ENCODE measurements at regions of chr17 and their contacts with region 1.

Region 1: GRCh38 chr17:48892940-48893645 is 506 bp downstream of the ATP5MC1 start:
- DNase-seq: no peak
- ATAC-seq: no peak; the same call in 2 of the 3 replicates
- H3K4me3 ChIP-seq: peak overlapping the region; percentile 76
- H3K27ac ChIP-seq: peak overlapping the region; percentile 75
- H3K4me1 ChIP-seq: peaks cover 3% of the 10 kb centered on the region; the same call in 1 of the 2 replicates
- H3K27me3 ChIP-seq: no peaks in the 10 kb centered on the region
- CTCF ChIP-seq: no peak
- EP300 ChIP-seq: no peak
- POLR2A ChIP-seq: no peak
- RAD21 ChIP-seq: no peak

Region 2: GRCh38 chr17:48441231-48441711 is 451.8 kb before region 1 on chr17:
- CTCF ChIA-PET with region 1: no interaction called
- POLR2A ChIA-PET with region 1: no interaction called
- RAD21 ChIA-PET with region 1: no interaction called
- SMC1A ChIA-PET with region 1: no interaction called
- in situ Hi-C with region 1: no loop called
- intact Hi-C with region 1: no loop called
- DNase-seq: peak; percentile 96
- ATAC-seq: peak; percentile 86
- H3K4me3 ChIP-seq: peak overlapping the region; percentile 25; the same call in 1 of the 2 replicates
- H3K27ac ChIP-seq: peak overlapping the region; percentile 94
- H3K4me1 ChIP-seq: peaks cover 64% of the 10 kb centered on the region
- H3K27me3 ChIP-seq: no peaks in the 10 kb centered on the region
- CTCF ChIP-seq: no peak
- EP300 ChIP-seq: peak; percentile 85 to 91
- POLR2A ChIP-seq: no peak; the same call in 1 of the 2 replicates
- RAD21 ChIP-seq: 0 out of 2 replicates have a peak, but pooled peaks have one; percentile 1

Region 3: GRCh38 chr17:48522031-48522653 is 371.0 kb before region 1 on chr17:
- CTCF ChIA-PET with region 1: no interaction called
- POLR2A ChIA-PET with region 1: no interaction called
- RAD21 ChIA-PET with region 1: no interaction called
- SMC1A ChIA-PET with region 1: no interaction called
- in situ Hi-C with region 1: no loop called
- intact Hi-C with region 1: no loop called
- DNase-seq: no peak
- ATAC-seq: no peak
- H3K4me3 ChIP-seq: no peak overlapping the region
- H3K27ac ChIP-seq: no peak overlapping the region
- H3K4me1 ChIP-seq: peaks cover 13% of the 10 kb centered on the region
- H3K27me3 ChIP-seq: 0 out of 4 replicates have a peak, but pooled peaks cover 0 to 3% of the 10 kb centered on the region in 2 experiments
- CTCF ChIP-seq: no peak
- EP300 ChIP-seq: no peak
- POLR2A ChIP-seq: no peak
- RAD21 ChIP-seq: no peak

Region 4: DNA sequence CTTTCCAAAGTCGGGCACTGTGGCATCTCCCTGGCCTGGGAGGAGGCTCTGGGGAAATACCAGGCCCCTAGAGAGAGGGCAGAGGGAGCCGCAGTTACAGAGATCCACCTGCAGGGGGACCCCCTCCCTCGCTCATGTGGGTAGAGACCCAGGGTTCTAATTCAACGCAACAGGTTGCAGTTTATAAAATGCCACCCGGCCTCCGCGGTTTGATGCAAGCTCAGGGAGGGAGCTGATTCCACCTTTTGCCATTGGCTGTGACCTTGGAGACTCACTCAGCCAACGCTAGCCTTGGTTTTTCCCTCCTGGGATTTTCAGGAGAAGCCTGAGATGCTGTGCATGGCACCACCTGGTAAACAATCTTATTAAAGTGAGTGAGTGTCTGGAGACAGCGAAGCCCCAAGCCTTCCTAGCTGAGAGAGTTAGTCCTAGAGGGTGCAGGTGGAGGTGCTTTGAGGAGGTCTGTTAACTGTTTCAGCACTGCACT is 88.1 kb before region 1 on chr17:
- CTCF ChIA-PET with region 1: interaction called, 490 read pairs
- POLR2A ChIA-PET with region 1: no interaction called
- RAD21 ChIA-PET with region 1: no interaction called
- SMC1A ChIA-PET with region 1: interaction called, 4 read pairs
- in situ Hi-C with region 1: no loop called
- intact Hi-C with region 1: no loop called
- DNase-seq: no peak
- ATAC-seq: peak; percentile 98
- H3K4me3 ChIP-seq: no peak overlapping the region
- H3K27ac ChIP-seq: no peak overlapping the region
- H3K4me1 ChIP-seq: no peaks in the 10 kb centered on the region
- H3K27me3 ChIP-seq: no peaks in the 10 kb centered on the region; a peak in 2 of 4 replicates
- CTCF ChIP-seq: peak; percentile 89 to 95 (median 90)
- EP300 ChIP-seq: no peak
- POLR2A ChIP-seq: no peak
- RAD21 ChIP-seq: peak; percentile 93

Region 5: GRCh38 chr17:48908047-48908843 is 15.2 kb after region 1 on chr17 and contains the start of gene UBE2Z:
- CTCF ChIA-PET with region 1: interaction called, 21 read pairs
- POLR2A ChIA-PET with region 1: interaction called, 15 read pairs
- RAD21 ChIA-PET with region 1: interaction called, 34 read pairs
- SMC1A ChIA-PET with region 1: interaction called, 29 read pairs
- in situ Hi-C with region 1: no loop called
- intact Hi-C with region 1: loop called (anchors 1 kb)
- DNase-seq: peak; percentile 89
- ATAC-seq: peak; percentile 86
- H3K4me3 ChIP-seq: peak within 1 kb of the TSS; percentile 84
- H3K27ac ChIP-seq: peak within 1 kb of the TSS; percentile 89
- H3K4me1 ChIP-seq: peaks cover 14% of the 10 kb centered on the region
- H3K27me3 ChIP-seq: no peaks in the 10 kb centered on the region
- CTCF ChIP-seq: peak in 2 of 3 experiments; percentile 24 to 31; a peak in 3 of 6 replicates
- EP300 ChIP-seq: 0 out of 4 replicates have a peak, but pooled peaks of 1 of the 2 experiments have one; percentile 18
- POLR2A ChIP-seq: peak; percentile 96
- RAD21 ChIP-seq: no peak
- polyA plus RNA-seq, gene UBE2Z: 23.1 to 34.9 TPM

Region 6: GRCh38 chr17:48915459-48916282 is 22.6 kb after region 1 on chr17:
- CTCF ChIA-PET with region 1: interaction called, 3 read pairs
- POLR2A ChIA-PET with region 1: interaction called, 7 read pairs
- RAD21 ChIA-PET with region 1: interaction called, 22 read pairs
- SMC1A ChIA-PET with region 1: interaction called, 16 read pairs
- in situ Hi-C with region 1: no loop called
- intact Hi-C with region 1: no loop called
- DNase-seq: peak; percentile 74
- ATAC-seq: peak; percentile 86
- H3K4me3 ChIP-seq: peak overlapping the region; percentile 43
- H3K27ac ChIP-seq: peak overlapping the region; percentile 93
- H3K4me1 ChIP-seq: peaks cover 33% of the 10 kb centered on the region
- H3K27me3 ChIP-seq: no peaks in the 10 kb centered on the region
- CTCF ChIP-seq: no peak
- EP300 ChIP-seq: peak; percentile 57 to 84; a peak in 2 of 4 replicates
- POLR2A ChIP-seq: no peak
- RAD21 ChIP-seq: no peak

Region 7: GRCh38 chr17:48944519-48945260 is 51.6 kb after region 1 on chr17 and contains the start of gene SNF8:
- CTCF ChIA-PET with region 1: no interaction called
- POLR2A ChIA-PET with region 1: interaction called, 11 read pairs
- RAD21 ChIA-PET with region 1: no interaction called
- SMC1A ChIA-PET with region 1: interaction called, 3 read pairs
- in situ Hi-C with region 1: no loop called
- intact Hi-C with region 1: no loop called
- DNase-seq: peak; percentile 51
- ATAC-seq: peak; percentile 97
- H3K4me3 ChIP-seq: peak within 1 kb of the TSS; percentile 99
- H3K27ac ChIP-seq: peak within 1 kb of the TSS; percentile 96
- H3K4me1 ChIP-seq: peaks cover 5% of the 10 kb centered on the region
- H3K27me3 ChIP-seq: no peaks in the 10 kb centered on the region
- CTCF ChIP-seq: no peak
- EP300 ChIP-seq: no peak
- POLR2A ChIP-seq: peak; percentile 95
- RAD21 ChIP-seq: no peak
- polyA plus RNA-seq, gene SNF8: 6.1 to 18.1 TPM

Region 8: DNA sequence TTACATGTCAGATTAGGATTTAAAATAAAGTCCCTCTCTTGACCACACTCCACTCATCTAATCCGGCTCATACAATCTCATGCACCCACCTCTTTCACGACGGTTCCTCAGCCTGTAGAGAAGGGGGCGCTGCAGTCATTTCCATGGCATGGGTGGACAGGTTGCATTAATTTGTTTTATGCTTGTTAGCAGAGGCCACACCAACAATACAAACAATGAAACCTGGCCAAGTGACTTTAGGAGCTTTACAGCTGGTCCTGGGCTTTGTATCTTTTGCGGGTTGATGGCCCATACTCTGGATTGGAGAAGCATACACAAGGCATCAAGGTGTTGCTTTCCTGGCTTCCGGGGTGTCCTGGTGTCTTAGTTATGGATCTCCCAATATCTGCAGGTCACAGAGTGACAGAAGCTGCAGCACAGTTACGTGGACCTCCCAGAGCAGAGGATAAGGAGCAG is 61.2 kb after region 1 on chr17:
- CTCF ChIA-PET with region 1: no interaction called
- POLR2A ChIA-PET with region 1: interaction called, 7 read pairs
- RAD21 ChIA-PET with region 1: interaction called, 10 read pairs
- SMC1A ChIA-PET with region 1: interaction called, 3 read pairs
- in situ Hi-C with region 1: no loop called
- intact Hi-C with region 1: no loop called
- DNase-seq: no peak
- ATAC-seq: peak; percentile 62
- H3K4me3 ChIP-seq: no peak overlapping the region
- H3K27ac ChIP-seq: no peak overlapping the region
- H3K4me1 ChIP-seq: peaks cover 7% of the 10 kb centered on the region; the same call in 1 of the 2 replicates
- H3K27me3 ChIP-seq: peaks cover 0 to 2% of the 10 kb centered on the region in 2 experiments; a peak in 2 of 4 replicates
- CTCF ChIP-seq: peak in 2 of 3 experiments; percentile 20 to 33; a peak in 2 of 6 replicates
- EP300 ChIP-seq: no peak
- POLR2A ChIP-seq: no peak
- RAD21 ChIP-seq: peak; percentile 57

Region 9: GRCh38 chr17:49191917-49192741 is 299.0 kb after region 1 on chr17:
- CTCF ChIA-PET with region 1: no interaction called
- POLR2A ChIA-PET with region 1: no interaction called
- RAD21 ChIA-PET with region 1: no interaction called
- SMC1A ChIA-PET with region 1: interaction called, 4 read pairs
- in situ Hi-C with region 1: no loop called
- intact Hi-C with region 1: loop called (anchors 10 kb)
- DNase-seq: peak; percentile 77
- ATAC-seq: peak; percentile 63
- H3K4me3 ChIP-seq: peak overlapping the region; percentile 85
- H3K27ac ChIP-seq: peak overlapping the region; percentile 98
- H3K4me1 ChIP-seq: peaks cover 28% of the 10 kb centered on the region
- H3K27me3 ChIP-seq: no peaks in the 10 kb centered on the region
- CTCF ChIP-seq: peak; percentile 32 to 54 (median 37); a peak in 4 of 6 replicates
- EP300 ChIP-seq: peak in 1 of 2 experiments; percentile 72; a peak in 1 of 4 replicates
- POLR2A ChIP-seq: peak; percentile 24; the same call in 1 of the 2 replicates
- RAD21 ChIP-seq: peak; percentile 14; the same call in 1 of the 2 replicates